SK-N-SH (cell line): ENCODE measurements at regions of chr17 and their contacts with region 1.

Region 1: GRCh38 chr17:77331301-77331864 is 190.6 kb downstream of the SEC14L1 start:
- DNase-seq: peak; percentile 98
- H3K4me3 ChIP-seq: peak overlapping the region in 1 of 2 experiments; percentile 27; a peak in 1 of 4 replicates
- H3K27ac ChIP-seq: peak overlapping the region; percentile 50 to 70
- H3K4me1 ChIP-seq: peaks cover 0 to 14% of the 10 kb centered on the region in 2 experiments; a peak in 1 of 4 replicates
- H3K27me3 ChIP-seq: no peaks in the 10 kb centered on the region
- CTCF ChIP-seq: peak; percentile 98
- EP300 ChIP-seq: peak in 1 of 2 experiments; percentile 15; a peak in 2 of 4 replicates
- RAD21 ChIP-seq: peak; percentile 100

Region 2: DNA sequence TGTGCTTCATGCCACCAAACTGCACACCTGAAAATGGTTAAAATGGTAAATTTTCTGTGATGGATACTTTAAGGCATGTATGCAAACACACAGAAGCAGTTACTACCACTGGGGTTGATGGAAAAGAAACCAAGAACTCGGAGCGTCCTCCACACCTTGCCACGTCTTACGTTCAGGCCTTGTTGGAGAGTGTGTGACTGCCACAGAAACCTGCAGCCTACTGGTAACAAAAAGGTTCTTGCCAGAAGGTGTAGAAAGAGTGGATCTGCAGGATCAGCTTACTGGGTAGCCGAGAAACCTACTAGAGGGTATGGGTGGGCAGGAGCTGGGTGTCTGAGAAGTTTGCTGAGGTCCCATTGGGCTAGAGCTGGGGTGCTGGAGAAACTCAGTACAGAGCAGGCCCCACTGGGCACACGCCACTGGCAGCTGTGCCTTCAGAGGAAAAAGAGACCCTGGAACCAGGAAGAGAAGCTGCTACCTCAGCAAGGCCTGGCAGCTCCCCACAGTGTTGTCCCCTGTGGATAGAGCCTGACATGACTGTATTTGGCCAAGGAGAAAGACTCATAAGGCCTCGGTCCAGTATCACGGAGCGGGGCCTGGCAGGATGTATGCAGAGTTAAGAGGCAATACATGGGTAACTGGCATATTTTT is 14.0 kb after region 1 on chr17:
- CTCF ChIA-PET with region 1: interaction called, 127 read pairs
- POLR2A ChIA-PET with region 1: no interaction called
- DNase-seq: no peak
- H3K4me3 ChIP-seq: no peak overlapping the region
- H3K27ac ChIP-seq: no peak overlapping the region
- H3K4me1 ChIP-seq: peaks cover 4 to 7% of the 10 kb centered on the region in 2 experiments; a peak in 1 of 4 replicates
- H3K27me3 ChIP-seq: no peaks in the 10 kb centered on the region
- CTCF ChIP-seq: no peak
- EP300 ChIP-seq: no peak
- RAD21 ChIP-seq: no peak

Region 3: DNA sequence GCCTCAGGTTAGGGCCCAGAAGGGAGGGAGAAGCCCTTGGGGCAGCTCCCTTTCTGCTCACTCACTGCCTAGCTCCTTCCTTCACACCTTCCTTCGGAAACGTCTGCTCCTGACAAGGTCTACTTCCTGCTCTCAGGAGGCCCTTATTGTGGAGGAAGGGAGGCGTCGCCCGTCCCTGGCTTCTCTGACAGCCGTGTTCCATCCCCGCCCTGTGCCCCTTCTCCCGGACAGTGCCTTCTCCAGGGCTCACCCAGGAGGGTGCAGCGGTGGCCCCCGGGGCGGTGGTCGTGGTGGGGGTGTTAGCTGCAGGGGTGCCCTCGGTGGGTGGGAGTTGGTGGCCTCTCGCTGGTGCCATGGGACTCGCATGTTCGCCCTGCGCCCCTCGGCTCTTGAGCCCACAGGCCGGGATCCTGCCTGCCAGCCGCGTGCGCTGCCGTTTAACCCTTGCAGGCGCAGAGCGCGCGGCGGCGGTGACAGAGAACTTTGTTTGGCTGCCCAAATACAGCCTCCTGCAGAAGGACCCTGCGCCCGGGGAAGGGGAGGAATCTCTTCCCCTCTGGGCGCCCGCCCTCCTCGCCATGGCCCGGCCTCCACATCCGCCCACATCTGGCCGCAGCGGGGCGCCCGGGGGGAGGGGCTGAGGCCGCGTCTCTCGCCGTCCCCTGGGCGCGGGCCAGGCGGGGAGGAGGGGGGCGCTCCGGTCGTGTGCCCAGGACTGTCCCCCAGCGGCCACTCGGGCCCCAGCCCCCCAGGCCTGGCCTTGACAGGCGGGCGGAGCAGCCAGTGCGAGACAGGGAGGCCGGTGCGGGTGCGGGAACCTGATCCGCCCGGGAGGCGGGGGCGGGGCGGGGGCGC is 41.3 kb after region 1 on chr17:
- CTCF ChIA-PET with region 1: interaction called, 23 read pairs
- POLR2A ChIA-PET with region 1: interaction called, 7 read pairs
- DNase-seq: peak; percentile 98
- H3K4me3 ChIP-seq: peak overlapping the region; percentile 88 to 95
- H3K27ac ChIP-seq: peak overlapping the region in 1 of 2 experiments; percentile 100; a peak in 2 of 4 replicates
- H3K4me1 ChIP-seq: peaks cover 31 to 64% of the 10 kb centered on the region in 2 experiments
- H3K27me3 ChIP-seq: no peaks in the 10 kb centered on the region
- CTCF ChIP-seq: no peak
- EP300 ChIP-seq: no peak
- RAD21 ChIP-seq: peak; percentile 28

Region 4: GRCh38 chr17:77420804-77421629 is 89.6 kb after region 1 on chr17:
- CTCF ChIA-PET with region 1: interaction called, 205 read pairs
- POLR2A ChIA-PET with region 1: no interaction called
- DNase-seq: peak; percentile 72
- H3K4me3 ChIP-seq: peak overlapping the region; percentile 2 to 8; a peak in 2 of 4 replicates
- H3K27ac ChIP-seq: peak overlapping the region; percentile 67
- H3K4me1 ChIP-seq: peaks cover 74 to 76% of the 10 kb centered on the region in 2 experiments
- H3K27me3 ChIP-seq: no peaks in the 10 kb centered on the region
- CTCF ChIP-seq: 0 out of 2 replicates have a peak, but pooled peaks have one; percentile 2
- EP300 ChIP-seq: peak; percentile 22 to 58; a peak in 1 of 4 replicates
- RAD21 ChIP-seq: no peak

Region 5: GRCh38 chr17:77451245-77451893 is 120.0 kb after region 1 on chr17:
- CTCF ChIA-PET with region 1: interaction called, 10 read pairs
- POLR2A ChIA-PET with region 1: no interaction called
- DNase-seq: peak; percentile 93
- H3K4me3 ChIP-seq: peak overlapping the region; percentile 61 to 79
- H3K27ac ChIP-seq: peak overlapping the region; percentile 89 to 95
- H3K4me1 ChIP-seq: peaks cover 28 to 56% of the 10 kb centered on the region in 2 experiments
- H3K27me3 ChIP-seq: no peaks in the 10 kb centered on the region
- CTCF ChIP-seq: no peak
- EP300 ChIP-seq: no peak
- RAD21 ChIP-seq: no peak

Region 6: GRCh38 chr17:77501101-77501566 is 169.8 kb after region 1 on chr17:
- CTCF ChIA-PET with region 1: interaction called, 16 read pairs
- POLR2A ChIA-PET with region 1: no interaction called
- DNase-seq: peak; percentile 75
- H3K4me3 ChIP-seq: no peak overlapping the region
- H3K27ac ChIP-seq: no peak overlapping the region
- H3K4me1 ChIP-seq: peaks cover 0 to 9% of the 10 kb centered on the region in 2 experiments; a peak in 1 of 4 replicates
- H3K27me3 ChIP-seq: no peaks in the 10 kb centered on the region
- CTCF ChIP-seq: peak; percentile 79
- EP300 ChIP-seq: no peak
- RAD21 ChIP-seq: peak; percentile 46